ENCODE measurements at regions of chr10 and their contacts with region 1.

Region 1: DNA sequence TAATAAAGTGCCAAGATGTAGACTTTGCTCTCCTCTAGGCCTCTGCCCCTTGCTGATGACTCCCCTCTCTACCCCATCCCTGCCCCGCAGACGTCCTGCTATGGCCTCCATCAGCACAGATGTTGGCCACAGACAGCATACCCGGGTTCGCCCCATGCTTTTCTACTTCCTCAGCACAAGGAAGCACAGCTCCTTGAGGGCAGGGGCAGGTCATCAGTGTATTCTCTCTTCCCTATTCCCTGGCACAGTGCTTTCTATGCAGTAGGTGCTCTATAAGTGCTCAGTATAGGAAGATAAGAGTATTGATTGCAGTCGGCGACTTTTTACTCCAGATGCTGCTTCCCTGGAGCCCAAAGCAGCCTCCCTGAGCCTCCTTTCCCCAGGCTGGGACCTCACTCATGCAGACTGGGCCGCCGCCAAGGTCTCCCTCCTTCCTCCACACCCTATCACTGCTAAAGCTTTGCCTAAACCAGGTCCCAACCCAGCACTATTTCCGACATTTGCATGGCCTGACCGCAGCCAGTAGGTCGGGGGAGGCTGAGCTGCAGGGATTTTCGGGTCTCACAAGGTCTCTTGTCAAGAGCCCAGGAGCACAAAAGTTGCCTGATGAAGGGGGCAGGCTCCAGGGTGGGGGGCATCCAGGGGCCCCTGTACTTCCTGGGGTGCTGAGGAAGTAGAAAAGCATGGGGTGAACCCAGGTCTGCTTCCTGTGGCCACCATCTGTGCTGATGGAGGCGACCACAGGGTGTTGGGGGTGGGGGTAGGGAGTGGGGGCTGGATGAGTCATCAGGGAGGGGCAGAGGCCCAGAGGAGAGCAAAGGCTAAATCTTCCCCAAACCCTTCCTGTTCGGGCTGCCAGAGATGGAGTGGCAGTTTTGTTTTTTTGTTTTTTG is 8.0 kb downstream of the CALHM3 start:
- DNase-seq: peak; percentile 36 to 92 (median 68)
- ATAC-seq: peak; percentile 89
- H3K4me3 ChIP-seq: peak overlapping the region; percentile 25
- H3K4me3 Mint-ChIP-seq: peak overlapping the region; percentile 46
- H3K27ac ChIP-seq: peak overlapping the region; percentile 37 to 76
- H3K27ac Mint-ChIP-seq: peak overlapping the region; percentile 80
- H3K4me1 ChIP-seq: peaks cover 54% of the 10 kb centered on the region
- H3K4me1 Mint-ChIP-seq: peaks cover 34% of the 10 kb centered on the region
- H3K27me3 ChIP-seq: no peaks in the 10 kb centered on the region
- H3K27me3 Mint-ChIP-seq: no peaks in the 10 kb centered on the region
- CTCF ChIP-seq: no peak

Region 2: GRCh38 chr10:103433858-103434257 is 37.1 kb before region 1 on chr10:
- CTCF ChIA-PET with region 1: no interaction called
- POLR2A ChIA-PET with region 1: no interaction called
- intact Hi-C with region 1: no loop called
- DNase-seq: peak in 2 of 14 experiments; percentile 20 to 35
- ATAC-seq: no peak
- H3K4me3 ChIP-seq: no peak overlapping the region
- H3K4me3 Mint-ChIP-seq: no peak overlapping the region
- H3K27ac ChIP-seq: no peak overlapping the region
- H3K27ac Mint-ChIP-seq: no peak overlapping the region
- H3K4me1 ChIP-seq: peaks cover 13% of the 10 kb centered on the region
- H3K4me1 Mint-ChIP-seq: peaks cover 24% of the 10 kb centered on the region
- H3K27me3 ChIP-seq: no peaks in the 10 kb centered on the region
- H3K27me3 Mint-ChIP-seq: no peaks in the 10 kb centered on the region
- CTCF ChIP-seq: no peak

Region 3: DNA sequence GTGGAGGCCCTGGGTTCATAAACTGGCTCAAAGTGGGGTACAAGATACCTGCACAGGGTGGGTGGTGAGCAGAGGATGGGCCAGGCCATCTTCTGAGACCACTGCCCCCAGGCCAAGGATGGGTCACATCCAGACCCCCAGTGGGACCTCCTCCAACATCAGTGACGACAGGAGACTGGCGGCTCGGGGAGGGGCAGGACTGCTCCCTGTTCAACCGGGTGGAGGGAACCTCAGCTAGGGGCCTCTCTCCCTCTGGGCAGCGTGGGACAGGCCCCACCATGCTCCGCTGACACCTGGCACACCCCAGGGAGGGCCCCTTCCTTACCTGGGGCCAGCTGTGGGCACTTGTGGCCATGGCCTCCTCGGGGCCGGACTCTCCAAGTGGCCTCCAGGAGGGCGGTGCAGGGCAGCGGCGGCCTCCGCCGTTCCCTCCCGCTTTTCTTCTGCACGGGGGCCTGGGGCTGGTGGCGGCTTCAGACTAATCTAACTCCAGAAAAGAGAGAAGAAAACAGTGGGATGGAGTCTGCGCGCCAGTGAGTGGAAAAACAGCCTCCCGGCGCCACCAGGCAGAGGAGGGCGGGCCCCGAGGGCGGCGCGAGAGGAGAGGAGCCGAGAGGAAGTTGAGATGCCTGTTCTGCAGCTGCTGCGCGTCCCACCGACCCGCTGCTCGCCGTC is 19.0 kb before region 1 on chr10 and contains the start of gene CALHM2:
- CTCF ChIA-PET with region 1: interaction called, 6 read pairs
- POLR2A ChIA-PET with region 1: interaction called, 7 read pairs
- intact Hi-C with region 1: loop called in 1 of 2 experiments (anchors 2 kb)
- DNase-seq: peak; percentile 22 to 73 (median 52)
- ATAC-seq: peak; percentile 69
- H3K4me3 ChIP-seq: peak within 1 kb of the TSS; percentile 72
- H3K4me3 Mint-ChIP-seq: peak within 1 kb of the TSS; percentile 93
- H3K27ac ChIP-seq: peak within 1 kb of the TSS; percentile 43 to 49
- H3K27ac Mint-ChIP-seq: peak within 1 kb of the TSS; percentile 76
- H3K4me1 ChIP-seq: peaks cover 64% of the 10 kb centered on the region
- H3K4me1 Mint-ChIP-seq: peaks cover 36% of the 10 kb centered on the region
- H3K27me3 ChIP-seq: no peaks in the 10 kb centered on the region
- H3K27me3 Mint-ChIP-seq: no peaks in the 10 kb centered on the region
- CTCF ChIP-seq: no peak
- total RNA-seq, gene CALHM2: 3.1 to 4.0 TPM

Measured in CD4-positive, alpha-beta T cell (primary cell).